ENCODE measurements at regions of chr1 and their contacts with region 1.

Region 1: DNA sequence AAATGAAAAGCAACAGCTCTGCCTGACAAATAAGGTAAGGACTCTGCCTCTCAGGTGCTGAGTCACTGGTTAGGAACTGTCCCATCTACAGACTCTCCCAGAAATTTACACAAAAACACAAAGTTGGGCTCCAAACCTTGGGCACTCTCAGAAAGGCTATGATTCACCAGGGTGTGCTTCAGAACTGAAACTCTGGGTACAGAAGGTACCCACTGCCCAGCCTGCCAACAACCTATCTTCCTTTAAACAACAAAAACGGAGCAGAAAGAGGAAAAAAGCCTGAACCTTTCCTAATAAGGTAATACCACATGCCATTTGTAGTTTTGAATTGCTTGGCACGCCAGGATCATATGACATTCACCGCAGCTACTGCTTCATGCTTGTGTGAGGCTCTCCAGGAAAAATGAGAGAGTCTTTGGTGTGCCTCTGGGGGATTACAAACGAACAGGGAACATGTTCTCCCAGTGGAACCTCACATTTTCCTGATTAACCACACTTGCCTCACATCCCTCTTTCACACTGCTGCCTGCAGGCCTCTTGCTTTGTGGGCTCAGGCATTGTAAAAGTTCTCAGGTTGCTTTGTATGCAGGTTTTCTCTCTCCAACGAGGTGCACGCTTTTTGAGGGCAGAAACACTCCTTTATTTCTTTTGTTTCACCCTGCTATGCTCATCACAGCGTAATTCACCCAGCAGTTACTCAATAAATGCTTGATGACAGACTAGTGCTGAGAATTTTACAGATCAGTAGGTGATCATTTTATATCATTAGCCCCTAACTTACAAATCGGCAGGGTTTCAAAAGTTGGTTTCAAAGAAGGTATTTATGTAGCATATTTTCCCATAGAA is 65.1 kb downstream of the GADD45A start:
- DNase-seq: no peak
- ATAC-seq: peak; percentile 23 to 65

Region 2: DNA sequence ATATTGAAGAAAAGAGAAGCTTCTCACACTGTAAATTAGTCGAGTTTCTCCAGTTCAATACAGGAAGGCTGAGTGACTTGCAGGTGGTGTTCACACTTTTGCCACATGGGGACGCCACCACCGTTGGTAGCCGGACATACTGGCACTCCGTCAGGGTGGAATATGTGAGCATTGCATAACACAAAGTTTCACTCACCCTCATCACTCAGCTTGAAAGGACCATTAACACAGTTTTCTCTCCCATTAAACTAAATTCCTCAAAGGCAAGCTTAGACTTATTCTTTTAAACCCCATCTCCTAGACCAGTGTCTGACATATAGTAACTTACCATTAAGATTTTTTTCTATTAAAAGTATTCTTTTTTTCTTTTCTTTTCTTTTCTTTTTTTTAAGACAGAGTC is 214.6 kb before region 1 on chr1:
- intact Hi-C with region 1: loop called in 1 of 2 experiments (anchors 10 kb)
- DNase-seq: peak; percentile 80
- ATAC-seq: peak; percentile 74 to 81

Region 3: DNA sequence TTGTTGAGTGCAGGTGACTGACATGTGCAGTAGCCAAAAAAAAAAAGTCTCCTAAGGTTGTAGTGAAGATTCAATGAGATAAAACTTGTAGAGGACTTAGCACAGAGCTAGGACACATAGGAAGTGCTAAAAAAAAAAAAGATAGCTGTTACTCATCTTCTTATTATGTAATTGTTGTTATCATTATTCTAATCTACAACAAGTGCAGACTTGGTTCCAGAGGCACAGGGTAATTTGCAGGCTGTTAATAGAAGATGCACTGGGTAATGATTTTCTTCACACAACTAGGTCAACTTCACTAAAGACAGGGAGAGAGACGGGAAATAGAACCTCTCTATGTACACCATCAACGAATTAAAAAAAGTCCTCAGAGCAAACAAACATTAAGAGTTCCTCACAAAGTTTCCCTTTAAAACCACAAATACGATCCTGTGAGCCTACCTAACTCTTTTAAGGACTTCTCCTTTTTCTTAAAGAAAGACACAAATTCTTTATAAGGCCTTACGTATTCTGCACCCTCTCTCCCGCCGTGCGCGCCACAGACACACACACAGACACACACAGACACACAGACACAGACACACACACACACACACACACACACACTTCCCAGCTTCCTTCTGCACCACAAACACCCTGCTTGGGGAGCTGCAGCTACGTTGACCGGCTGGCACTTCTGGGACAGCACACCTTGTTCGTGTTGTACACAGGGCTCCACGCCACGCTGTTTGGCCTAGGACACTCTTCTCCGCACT is 114.8 kb before region 1 on chr1:
- intact Hi-C with region 1: no loop called
- DNase-seq: no peak
- ATAC-seq: no peak

Region 4: GRCh38 chr1:67803380-67804279 is 53.6 kb after region 1 on chr1:
- intact Hi-C with region 1: no loop called
- DNase-seq: no peak
- ATAC-seq: peak in 1 of 2 donors; percentile 59

Measured in left cardiac atrium (tissue), 4 donors.